Activated T-helper 2 cell treated with anti-CD3 and anti-CD28 coated beads, Interferon-gamma antibody, Interleukin-2, Interleukin-4, amounts not matched to agents 10 μg/mL and 5 μg/mL and 100 μg/mL, durations not matched to agents 14 hours and 24 hours and 36 hours (primary cell): ENCODE measurements at regions of chr6 and their contacts with region 1.

Region 1: DNA sequence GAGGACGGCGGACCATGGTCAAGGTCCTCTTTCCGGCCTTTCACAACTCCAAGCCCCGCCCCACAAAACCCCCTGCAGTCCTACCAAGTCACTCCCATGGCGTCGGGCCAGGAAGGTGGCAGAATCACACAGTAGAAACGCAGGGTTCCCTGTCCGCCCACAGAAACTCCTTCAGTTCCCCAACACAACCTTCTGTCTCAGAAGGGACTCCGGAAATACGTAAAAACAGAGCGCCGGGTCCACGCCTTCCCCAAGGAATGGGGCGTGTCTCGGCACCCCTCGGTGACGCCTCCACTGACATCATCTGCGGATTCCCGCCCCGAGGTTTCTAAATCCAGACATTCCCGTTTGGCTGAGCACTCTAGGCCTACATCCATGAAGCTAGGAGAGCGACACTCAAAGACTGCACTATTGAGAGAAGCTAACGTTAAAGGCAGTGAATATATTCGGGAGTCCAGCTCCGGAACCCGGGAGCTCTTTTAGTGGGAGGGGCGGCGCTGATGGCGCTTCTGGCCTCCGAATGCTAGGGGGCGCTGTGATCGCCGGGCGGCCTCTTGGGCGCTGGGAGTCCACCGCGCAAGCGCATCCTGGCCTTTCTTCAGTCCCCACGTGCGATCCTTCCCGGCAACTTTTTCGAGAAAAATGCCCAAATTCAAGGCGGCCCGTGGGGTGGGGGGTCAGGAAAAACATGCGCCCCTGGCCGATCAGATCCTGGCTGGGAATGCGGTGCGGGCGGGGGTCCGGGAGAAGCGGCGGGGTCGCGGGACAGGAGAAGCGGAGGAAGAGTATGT is at the starts of genes BYSL and MED20:
- DNase-seq: peak; percentile 90
- H3K4me3 Mint-ChIP-seq: peak within 1 kb of the TSS; percentile 97
- H3K27ac Mint-ChIP-seq: peak within 1 kb of the TSS; percentile 98
- H3K4me1 Mint-ChIP-seq: peaks cover 45% of the 10 kb centered on the region
- H3K27me3 Mint-ChIP-seq: no peaks in the 10 kb centered on the region
- total RNA-seq, gene BYSL: 58.2 and 60.5 TPM in 2 replicates
- total RNA-seq, gene MED20: 23.7 and 24.3 TPM in 2 replicates

Region 2: GRCh38 chr6:41072676-41073623 is 848.2 kb before region 1 on chr6 and contains the start of gene NFYA:
- intact Hi-C with region 1: loop called (anchors 5 kb)
- DNase-seq: peak; percentile 100
- H3K4me3 Mint-ChIP-seq: peak within 1 kb of the TSS; percentile 98
- H3K27ac Mint-ChIP-seq: peak within 1 kb of the TSS; percentile 99
- H3K4me1 Mint-ChIP-seq: peaks cover 56% of the 10 kb centered on the region
- H3K27me3 Mint-ChIP-seq: no peaks in the 10 kb centered on the region
- total RNA-seq, gene NFYA: 28.1 and 28.2 TPM in 2 replicates

Region 3: GRCh38 chr6:41157323-41157722 is 763.8 kb before region 1 on chr6:
- intact Hi-C with region 1: no loop called
- DNase-seq: no peak
- H3K4me3 Mint-ChIP-seq: no peak overlapping the region
- H3K27ac Mint-ChIP-seq: no peak overlapping the region
- H3K4me1 Mint-ChIP-seq: no peaks in the 10 kb centered on the region
- H3K27me3 Mint-ChIP-seq: peaks cover 15% of the 10 kb centered on the region

Region 4: DNA sequence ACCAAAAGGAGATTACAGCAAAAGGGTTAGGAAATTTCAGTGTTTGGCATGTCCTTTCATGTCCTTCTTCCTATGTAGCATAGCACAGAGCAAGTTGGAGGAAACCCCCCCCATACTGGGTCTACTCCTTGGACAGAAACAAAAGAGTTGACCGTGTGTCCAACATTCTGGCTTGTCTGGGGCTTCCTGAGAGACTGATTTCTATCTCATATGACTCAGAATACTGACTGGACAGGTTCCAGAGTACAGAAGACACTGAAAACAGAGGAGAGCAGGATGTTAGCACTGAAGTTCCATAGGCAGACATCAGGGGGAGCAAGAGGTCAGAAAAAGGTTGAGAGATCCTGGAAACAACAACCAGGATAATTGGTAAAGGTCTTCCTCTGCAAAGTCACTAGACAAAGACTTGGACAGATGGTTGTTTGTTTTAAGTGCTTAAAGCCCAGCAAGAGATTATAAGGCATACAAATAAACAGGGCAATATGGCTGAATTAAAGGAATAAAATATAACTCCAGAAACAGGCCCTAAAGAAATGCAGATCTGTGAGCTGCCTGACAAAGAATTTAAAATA is 74.4 kb before region 1 on chr6:
- intact Hi-C with region 1: loop called (anchors 2 kb)
- DNase-seq: peak; percentile 21
- H3K4me3 Mint-ChIP-seq: no peak overlapping the region
- H3K27ac Mint-ChIP-seq: no peak overlapping the region
- H3K4me1 Mint-ChIP-seq: peaks cover 19% of the 10 kb centered on the region
- H3K27me3 Mint-ChIP-seq: no peaks in the 10 kb centered on the region

Region 5: GRCh38 chr6:41941280-41942066 is 20.4 kb after region 1 on chr6 and contains the start of gene CCND3:
- intact Hi-C with region 1: loop called (anchors 1 kb)
- DNase-seq: peak; percentile 87
- H3K4me3 Mint-ChIP-seq: peak within 1 kb of the TSS; percentile 93
- H3K27ac Mint-ChIP-seq: peak within 1 kb of the TSS; percentile 87
- H3K4me1 Mint-ChIP-seq: peaks cover 44% of the 10 kb centered on the region
- H3K27me3 Mint-ChIP-seq: no peaks in the 10 kb centered on the region
- total RNA-seq, gene CCND3: 207 and 217 TPM in 2 replicates

Region 6: DNA sequence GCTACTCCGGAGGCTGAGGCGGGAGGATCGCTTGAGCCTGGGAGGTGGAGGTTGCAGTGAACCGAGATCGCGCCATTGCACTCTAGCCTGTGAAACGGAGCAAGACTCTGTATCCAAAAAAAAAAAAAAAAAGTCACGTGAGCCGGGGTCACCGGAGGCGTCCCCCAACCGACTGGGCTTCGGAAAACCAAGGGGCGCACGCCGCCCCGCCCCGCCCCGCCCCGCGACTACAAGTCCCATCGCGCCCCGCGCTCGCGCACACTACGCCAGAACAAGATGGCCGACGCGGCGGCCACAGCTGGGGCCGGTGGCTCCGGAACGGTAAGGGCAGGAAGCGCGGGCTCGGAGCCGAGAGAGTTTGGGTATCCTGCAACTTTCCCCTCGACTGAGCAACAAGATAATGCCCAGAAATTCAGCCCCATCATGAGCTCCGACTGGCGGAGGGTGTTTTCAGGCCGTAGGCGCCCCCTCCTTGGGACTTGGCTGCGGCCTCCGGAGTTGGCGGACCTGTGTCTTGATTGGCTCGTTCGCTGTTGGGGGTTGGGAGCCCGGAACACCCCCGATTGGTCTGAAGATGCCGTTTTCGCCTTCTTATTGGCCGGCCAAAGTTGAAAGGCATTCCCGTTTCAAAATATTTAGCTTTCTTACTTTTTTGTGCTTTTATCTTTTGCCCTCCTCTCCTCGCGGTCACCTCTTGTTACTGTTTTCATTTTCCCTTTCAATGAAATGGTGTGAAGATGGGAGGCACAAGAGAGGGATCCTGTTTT is 129.3 kb after region 1 on chr6 and contains the start of gene TAF8:
- intact Hi-C with region 1: loop called (anchors 2 kb)
- DNase-seq: peak; percentile 90
- H3K4me3 Mint-ChIP-seq: peak within 1 kb of the TSS; percentile 94
- H3K27ac Mint-ChIP-seq: peak within 1 kb of the TSS; percentile 98
- H3K4me1 Mint-ChIP-seq: peaks cover 50% of the 10 kb centered on the region
- H3K27me3 Mint-ChIP-seq: no peaks in the 10 kb centered on the region
- total RNA-seq, gene TAF8: 38.8 and 41.9 TPM in 2 replicates